Endothelial cell of umbilical vein (primary cell): ENCODE measurements at regions of chr1 and their contacts with region 1.

Region 1: DNA sequence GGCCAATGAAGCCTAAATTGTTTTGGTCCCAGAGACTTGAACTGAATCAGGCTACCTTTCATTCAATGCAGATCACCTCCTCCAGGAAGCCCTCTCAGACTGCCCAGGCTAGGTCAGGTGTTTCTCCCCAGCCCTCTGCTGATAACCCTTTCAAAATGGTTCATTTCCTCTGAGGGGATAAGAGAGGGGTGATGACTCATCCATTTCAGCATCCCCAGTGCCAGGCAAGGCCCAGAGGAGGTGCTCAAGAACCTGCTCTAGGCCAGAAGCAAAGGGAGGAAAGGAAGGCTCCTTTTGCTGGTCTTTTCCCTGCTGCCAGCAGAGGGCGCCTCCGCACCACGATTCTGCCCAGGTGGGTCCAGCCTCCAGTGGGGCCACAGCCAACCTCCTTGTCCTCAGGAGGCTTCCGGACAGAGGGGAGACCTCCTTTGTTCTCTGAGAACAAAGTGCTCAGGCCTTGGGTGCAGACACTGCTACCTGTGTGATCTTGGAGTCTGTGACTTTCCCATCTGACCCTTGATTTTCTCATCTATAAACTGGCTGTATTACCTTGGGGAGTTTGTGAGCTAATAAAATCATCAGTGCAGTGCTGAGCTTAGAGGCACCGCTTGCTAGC is 45.3 kb upstream of the ARHGEF10L start:
- DNase-seq: peak; percentile 42
- H3K4me3 ChIP-seq: no peak overlapping the region
- H3K27ac ChIP-seq: no peak overlapping the region
- H3K4me1 ChIP-seq: no peaks in the 10 kb centered on the region
- H3K27me3 ChIP-seq: no peaks in the 10 kb centered on the region
- CTCF ChIP-seq: peak; percentile 93
- POLR2A ChIP-seq: no peak

Region 2: GRCh38 chr1:17287130-17287776 is 207.0 kb before region 1 on chr1:
- CTCF ChIA-PET with region 1: no interaction called
- POLR2A ChIA-PET with region 1: no interaction called
- dilution Hi-C with region 1: no loop called
- intact Hi-C with region 1: no loop called
- DNase-seq: no peak
- H3K4me3 ChIP-seq: no peak overlapping the region
- H3K27ac ChIP-seq: no peak overlapping the region
- H3K4me1 ChIP-seq: peaks cover 4% of the 10 kb centered on the region
- H3K27me3 ChIP-seq: no peaks in the 10 kb centered on the region
- CTCF ChIP-seq: no peak
- POLR2A ChIP-seq: no peak

Region 3: DNA sequence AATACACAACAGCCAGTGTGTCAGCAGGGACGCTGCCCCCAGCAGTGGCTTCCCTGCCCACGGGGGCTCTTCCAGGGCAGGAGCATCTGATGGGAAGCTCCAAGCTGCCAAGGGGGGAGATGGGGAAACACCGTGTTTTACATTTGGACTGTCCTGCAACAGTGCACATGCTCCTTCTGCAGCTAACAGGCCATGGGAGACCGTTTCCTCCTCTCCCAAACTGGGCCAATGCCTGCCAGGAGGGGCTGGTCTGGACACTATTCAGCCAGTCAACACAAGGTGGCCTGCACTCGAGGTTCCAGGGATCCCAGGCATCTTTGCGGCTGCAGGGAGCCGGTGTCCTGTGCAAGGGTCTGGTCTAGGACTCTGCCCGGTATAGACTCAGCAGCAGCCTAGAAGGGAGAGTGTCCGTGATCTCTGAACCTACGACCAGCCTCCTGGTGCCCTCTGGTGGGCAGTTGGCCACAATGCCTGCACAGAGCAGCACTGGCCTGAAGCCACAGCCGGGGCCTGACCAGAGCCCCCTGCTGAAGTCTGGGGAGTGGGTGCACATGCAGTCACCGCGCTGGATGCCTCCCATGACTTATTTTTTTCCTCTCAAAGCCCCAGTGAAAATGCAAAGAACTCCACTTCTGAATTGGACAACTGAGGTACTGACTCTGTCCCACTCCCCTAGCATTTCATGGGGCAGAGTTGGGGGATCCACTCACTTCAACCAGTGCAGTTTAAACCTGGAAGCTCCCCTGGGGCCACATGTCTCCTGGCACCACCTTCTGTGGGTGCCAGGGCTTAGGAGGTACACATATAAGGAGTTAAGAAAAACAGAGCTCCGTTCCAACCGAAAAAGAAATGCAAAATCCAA is 88.1 kb before region 1 on chr1:
- CTCF ChIA-PET with region 1: no interaction called
- POLR2A ChIA-PET with region 1: no interaction called
- dilution Hi-C with region 1: no loop called
- intact Hi-C with region 1: no loop called
- DNase-seq: peak; percentile 44
- H3K4me3 ChIP-seq: no peak overlapping the region
- H3K27ac ChIP-seq: no peak overlapping the region
- H3K4me1 ChIP-seq: no peaks in the 10 kb centered on the region
- H3K27me3 ChIP-seq: no peaks in the 10 kb centered on the region
- CTCF ChIP-seq: peak; percentile 72 to 92
- POLR2A ChIP-seq: no peak

Region 4: GRCh38 chr1:17419626-17420328 is 74.4 kb before region 1 on chr1:
- CTCF ChIA-PET with region 1: no interaction called
- POLR2A ChIA-PET with region 1: no interaction called
- dilution Hi-C with region 1: no loop called
- intact Hi-C with region 1: loop called (anchors 2 kb)
- DNase-seq: peak; percentile 57
- H3K4me3 ChIP-seq: no peak overlapping the region
- H3K27ac ChIP-seq: no peak overlapping the region
- H3K4me1 ChIP-seq: no peaks in the 10 kb centered on the region
- H3K27me3 ChIP-seq: no peaks in the 10 kb centered on the region
- CTCF ChIP-seq: peak; percentile 99
- POLR2A ChIP-seq: no peak

Region 5: GRCh38 chr1:17520071-17520813 is 26.0 kb after region 1 on chr1:
- CTCF ChIA-PET with region 1: no interaction called
- POLR2A ChIA-PET with region 1: no interaction called
- dilution Hi-C with region 1: no loop called
- intact Hi-C with region 1: no loop called
- DNase-seq: no peak
- H3K4me3 ChIP-seq: no peak overlapping the region
- H3K27ac ChIP-seq: no peak overlapping the region
- H3K4me1 ChIP-seq: no peaks in the 10 kb centered on the region
- H3K27me3 ChIP-seq: no peaks in the 10 kb centered on the region
- CTCF ChIP-seq: no peak
- POLR2A ChIP-seq: no peak

Region 6: DNA sequence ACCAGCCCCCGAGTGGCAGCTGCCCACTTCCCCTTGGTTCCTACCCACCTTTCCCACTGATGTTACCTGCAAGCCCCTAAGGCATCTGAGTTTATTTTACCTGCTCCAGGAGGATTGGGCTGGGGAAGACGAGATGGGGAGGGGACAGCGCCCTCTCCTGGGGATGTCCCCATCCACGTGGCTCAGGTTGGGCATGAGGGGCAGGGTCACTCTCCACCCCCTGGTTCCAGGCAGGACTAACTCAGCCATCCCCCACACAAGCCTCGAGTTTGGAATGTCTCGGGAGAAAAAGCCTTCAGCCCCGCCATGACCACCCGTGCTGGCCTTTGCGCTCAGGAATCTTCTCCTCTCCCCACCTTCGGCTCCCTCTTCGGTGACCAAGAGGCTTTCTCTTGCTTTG is 135.2 kb after region 1 on chr1:
- CTCF ChIA-PET with region 1: no interaction called
- POLR2A ChIA-PET with region 1: no interaction called
- dilution Hi-C with region 1: no loop called
- intact Hi-C with region 1: loop called (anchors 1 kb)
- DNase-seq: no peak
- H3K4me3 ChIP-seq: no peak overlapping the region
- H3K27ac ChIP-seq: no peak overlapping the region
- H3K4me1 ChIP-seq: no peaks in the 10 kb centered on the region
- H3K27me3 ChIP-seq: no peaks in the 10 kb centered on the region
- CTCF ChIP-seq: peak in 1 of 2 donors; percentile 17
- POLR2A ChIP-seq: no peak

Region 7: GRCh38 chr1:17922833-17923232 is 428.6 kb after region 1 on chr1:
- CTCF ChIA-PET with region 1: no interaction called
- POLR2A ChIA-PET with region 1: no interaction called
- dilution Hi-C with region 1: no loop called
- intact Hi-C with region 1: no loop called
- DNase-seq: no peak
- H3K4me3 ChIP-seq: no peak overlapping the region
- H3K27ac ChIP-seq: no peak overlapping the region
- H3K4me1 ChIP-seq: no peaks in the 10 kb centered on the region
- H3K27me3 ChIP-seq: no peaks in the 10 kb centered on the region
- CTCF ChIP-seq: no peak
- POLR2A ChIP-seq: no peak

Region 8: GRCh38 chr1:18575620-18576019 is 1081.4 kb after region 1 on chr1:
- CTCF ChIA-PET with region 1: interaction called, 51 read pairs
- POLR2A ChIA-PET with region 1: no interaction called
- dilution Hi-C with region 1: no loop called
- intact Hi-C with region 1: loop called (anchors 2 kb)
- DNase-seq: peak; percentile 18
- H3K4me3 ChIP-seq: no peak overlapping the region
- H3K27ac ChIP-seq: no peak overlapping the region
- H3K4me1 ChIP-seq: no peaks in the 10 kb centered on the region
- H3K27me3 ChIP-seq: no peaks in the 10 kb centered on the region
- CTCF ChIP-seq: peak; percentile 39 to 75
- POLR2A ChIP-seq: no peak

Region 9: DNA sequence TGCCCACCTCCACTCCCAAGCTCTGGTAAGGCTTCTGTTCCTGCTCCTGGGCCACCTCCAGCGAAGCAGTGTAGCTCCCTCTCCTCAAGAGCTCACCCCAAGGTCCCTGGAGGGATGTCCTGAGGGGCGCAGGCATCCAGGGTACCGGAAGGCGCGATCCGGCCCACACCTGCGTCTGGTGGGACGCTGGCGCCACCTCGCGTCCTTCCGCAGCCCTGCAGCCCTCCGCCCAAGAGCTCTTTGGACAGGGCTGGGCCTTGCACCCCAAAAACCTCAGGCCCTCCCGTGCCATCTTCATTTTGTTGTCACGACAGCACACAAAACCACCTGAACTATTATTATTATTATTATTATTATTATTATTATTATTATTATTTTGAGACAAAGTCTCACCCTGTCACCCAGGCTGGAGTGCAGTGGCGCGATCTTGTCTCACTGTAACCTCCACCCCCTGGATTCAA is 1087.2 kb after region 1 on chr1:
- CTCF ChIA-PET with region 1: interaction called, 51 read pairs
- POLR2A ChIA-PET with region 1: no interaction called
- dilution Hi-C with region 1: no loop called
- intact Hi-C with region 1: loop called (anchors 2 kb)
- DNase-seq: peak; percentile 8
- H3K4me3 ChIP-seq: no peak overlapping the region
- H3K27ac ChIP-seq: no peak overlapping the region
- H3K4me1 ChIP-seq: no peaks in the 10 kb centered on the region
- H3K27me3 ChIP-seq: no peaks in the 10 kb centered on the region
- CTCF ChIP-seq: peak; percentile 68 to 84
- POLR2A ChIP-seq: no peak